Ovary (tissue), 10 donors: ENCODE measurements at regions of chr18 and their contacts with region 1.

Region 1: DNA sequence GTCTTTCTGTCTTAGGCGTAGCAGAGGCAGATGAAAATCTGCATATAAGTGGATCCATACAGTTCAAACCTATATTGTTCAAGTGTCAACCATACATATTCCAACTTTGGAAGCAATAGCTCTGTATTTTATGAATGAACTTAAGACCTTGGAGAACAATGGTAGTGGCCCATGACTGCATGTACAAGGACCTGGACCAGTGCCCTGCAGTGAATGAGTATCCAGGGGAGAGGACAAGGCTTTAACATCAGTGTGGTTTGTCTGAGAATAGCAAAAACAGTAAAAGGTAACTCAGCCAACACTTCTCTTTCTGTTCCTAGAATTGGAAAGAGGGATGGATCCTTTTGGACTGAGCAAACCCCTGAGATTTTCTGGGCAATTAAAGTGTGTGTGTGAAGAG is 230.8 kb upstream of the LINC00305 start:
- DNase-seq: no peak
- H3K4me3 ChIP-seq: no peak overlapping the region
- H3K27ac ChIP-seq: no peak overlapping the region
- H3K4me1 ChIP-seq: no peaks in the 10 kb centered on the region
- H3K27me3 ChIP-seq: no peaks in the 10 kb centered on the region
- CTCF ChIP-seq: no peak
- EP300 ChIP-seq: no peak
- POLR2A ChIP-seq: no peak

Region 2: GRCh38 chr18:64234321-64234720 is 145.3 kb before region 1 on chr18:
- intact Hi-C with region 1: no loop called
- DNase-seq: no peak
- H3K4me3 ChIP-seq: no peak overlapping the region
- H3K27ac ChIP-seq: no peak overlapping the region
- H3K4me1 ChIP-seq: no peaks in the 10 kb centered on the region
- H3K27me3 ChIP-seq: no peaks in the 10 kb centered on the region
- CTCF ChIP-seq: no peak
- EP300 ChIP-seq: no peak
- POLR2A ChIP-seq: no peak

Region 3: GRCh38 chr18:64436111-64436510 is 56.4 kb after region 1 on chr18:
- intact Hi-C with region 1: loop called in 1 of 4 experiments (anchors 10 kb)
- DNase-seq: no peak
- H3K4me3 ChIP-seq: no peak overlapping the region
- H3K27ac ChIP-seq: no peak overlapping the region
- H3K4me1 ChIP-seq: no peaks in the 10 kb centered on the region
- H3K27me3 ChIP-seq: no peaks in the 10 kb centered on the region
- CTCF ChIP-seq: no peak
- EP300 ChIP-seq: no peak
- POLR2A ChIP-seq: no peak

Region 4: DNA sequence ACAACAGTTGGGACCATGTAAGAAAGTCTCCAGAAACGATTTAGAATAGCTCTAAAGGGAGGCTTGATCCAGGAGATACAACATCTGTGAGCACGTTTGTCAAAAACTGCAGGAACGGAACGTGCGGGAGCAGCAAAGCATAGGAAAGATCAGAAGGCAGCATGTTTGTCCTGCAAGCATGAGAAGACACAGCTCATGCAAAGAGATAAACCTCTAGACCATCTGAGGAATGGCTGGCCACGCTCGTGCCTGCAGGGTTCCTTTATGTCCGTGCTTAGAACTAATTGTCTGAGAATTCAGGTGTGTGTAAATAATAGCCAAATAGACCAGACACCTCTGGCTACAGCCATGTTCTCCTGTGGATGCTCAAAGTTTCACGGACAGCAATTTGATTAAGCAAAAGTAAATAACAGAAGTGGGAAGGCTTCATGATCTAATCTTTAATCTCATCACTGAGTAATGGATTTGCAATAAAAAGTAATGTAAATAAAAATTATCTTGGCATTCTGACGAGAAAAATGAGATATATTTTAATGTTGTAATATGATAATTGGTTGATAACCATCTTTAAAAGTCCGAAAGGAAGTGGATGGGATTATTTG is 836.3 kb after region 1 on chr18:
- intact Hi-C with region 1: no loop called
- DNase-seq: no peak
- H3K4me3 ChIP-seq: no peak overlapping the region
- H3K27ac ChIP-seq: no peak overlapping the region
- H3K4me1 ChIP-seq: no peaks in the 10 kb centered on the region
- H3K27me3 ChIP-seq: no peaks in the 10 kb centered on the region
- CTCF ChIP-seq: no peak
- EP300 ChIP-seq: no peak
- POLR2A ChIP-seq: no peak